Spleen (tissue), 13 donors: ENCODE measurements at regions of chrX and their contacts with region 1.

Region 1: GRCh38 chrX:19887911-19888879 is 795 bp upstream of the SH3KBP1 start:
- DNase-seq: peak; percentile 90
- H3K4me3 ChIP-seq: peak overlapping the region; percentile 31 to 83 (median 58)
- H3K27ac ChIP-seq: peak overlapping the region; percentile 13 to 96 (median 76)
- H3K4me1 ChIP-seq: peaks cover 0 to 41% (median 24%) of the 10 kb centered on the region in 6 donors
- H3K27me3 ChIP-seq: peaks cover 0 to 4% (median 0%) of the 10 kb centered on the region in 7 donors
- CTCF ChIP-seq: peak; percentile 24 to 77 (median 60)
- POLR2A ChIP-seq: no peak

Region 2: GRCh38 chrX:19443869-19444524 is 444.2 kb before region 1 on chrX:
- intact Hi-C with region 1: no loop called
- DNase-seq: no peak
- H3K4me3 ChIP-seq: no peak overlapping the region
- H3K27ac ChIP-seq: no peak overlapping the region
- H3K4me1 ChIP-seq: no peaks in the 10 kb centered on the region
- H3K27me3 ChIP-seq: no peaks in the 10 kb centered on the region
- CTCF ChIP-seq: no peak
- POLR2A ChIP-seq: no peak

Region 3: GRCh38 chrX:19593690-19594089 is 294.5 kb before region 1 on chrX:
- intact Hi-C with region 1: loop called (anchors 5 kb)
- DNase-seq: no peak
- H3K4me3 ChIP-seq: no peak overlapping the region
- H3K27ac ChIP-seq: no peak overlapping the region
- H3K4me1 ChIP-seq: peaks cover 0 to 15% (median 0%) of the 10 kb centered on the region in 6 donors
- H3K27me3 ChIP-seq: no peaks in the 10 kb centered on the region
- CTCF ChIP-seq: peak in 9 of 11 experiments; percentile 11 to 53 (median 33)
- POLR2A ChIP-seq: no peak

Region 4: DNA sequence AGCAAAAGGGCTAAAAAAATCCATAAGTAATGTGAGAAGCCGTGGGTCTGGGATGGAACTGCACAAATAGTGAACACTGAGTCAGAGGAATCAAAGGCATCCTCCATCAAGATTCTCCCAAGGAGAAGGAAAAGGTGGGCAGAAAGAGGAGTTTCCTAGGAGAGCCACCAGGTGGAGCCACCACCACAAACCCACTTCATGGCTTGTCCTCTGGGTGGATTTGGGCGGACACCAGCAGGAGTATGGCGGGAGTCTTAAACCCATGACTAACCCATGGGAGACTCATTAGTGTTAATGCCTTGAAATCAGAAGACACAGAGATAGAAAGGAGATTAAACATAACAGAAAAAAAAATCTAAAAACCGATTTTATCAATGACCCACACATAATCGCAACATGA is 148.5 kb before region 1 on chrX:
- intact Hi-C with region 1: loop called (anchors 5 kb)
- DNase-seq: peak; percentile 81
- H3K4me3 ChIP-seq: no peak overlapping the region
- H3K27ac ChIP-seq: no peak overlapping the region
- H3K4me1 ChIP-seq: peaks cover 0 to 43% (median 6%) of the 10 kb centered on the region in 6 donors
- H3K27me3 ChIP-seq: peaks cover 0 to 3% (median 0%) of the 10 kb centered on the region in 7 donors
- CTCF ChIP-seq: peak; percentile 43 to 75 (median 67)
- POLR2A ChIP-seq: no peak

Region 5: GRCh38 chrX:20029728-20030127 is 141.5 kb after region 1 on chrX:
- intact Hi-C with region 1: no loop called
- DNase-seq: no peak
- H3K4me3 ChIP-seq: no peak overlapping the region
- H3K27ac ChIP-seq: no peak overlapping the region
- H3K4me1 ChIP-seq: no peaks in the 10 kb centered on the region
- H3K27me3 ChIP-seq: no peaks in the 10 kb centered on the region
- CTCF ChIP-seq: no peak
- POLR2A ChIP-seq: no peak